Activated T-helper 1 cell treated with anti-CD3 and anti-CD28 coated beads, Interleukin-12 subunit alpha, Interleukin-12 subunit beta, Interleukin-2, Interleukin-4 antibody, amounts not matched to agents 30 ng/mL and 10 ng/mL and 1 ng/mL, durations not matched to agents 14 hours and 24 hours and 36 hours (primary cell): ENCODE measurements at regions of chr4 and their contacts with region 1.

Region 1: DNA sequence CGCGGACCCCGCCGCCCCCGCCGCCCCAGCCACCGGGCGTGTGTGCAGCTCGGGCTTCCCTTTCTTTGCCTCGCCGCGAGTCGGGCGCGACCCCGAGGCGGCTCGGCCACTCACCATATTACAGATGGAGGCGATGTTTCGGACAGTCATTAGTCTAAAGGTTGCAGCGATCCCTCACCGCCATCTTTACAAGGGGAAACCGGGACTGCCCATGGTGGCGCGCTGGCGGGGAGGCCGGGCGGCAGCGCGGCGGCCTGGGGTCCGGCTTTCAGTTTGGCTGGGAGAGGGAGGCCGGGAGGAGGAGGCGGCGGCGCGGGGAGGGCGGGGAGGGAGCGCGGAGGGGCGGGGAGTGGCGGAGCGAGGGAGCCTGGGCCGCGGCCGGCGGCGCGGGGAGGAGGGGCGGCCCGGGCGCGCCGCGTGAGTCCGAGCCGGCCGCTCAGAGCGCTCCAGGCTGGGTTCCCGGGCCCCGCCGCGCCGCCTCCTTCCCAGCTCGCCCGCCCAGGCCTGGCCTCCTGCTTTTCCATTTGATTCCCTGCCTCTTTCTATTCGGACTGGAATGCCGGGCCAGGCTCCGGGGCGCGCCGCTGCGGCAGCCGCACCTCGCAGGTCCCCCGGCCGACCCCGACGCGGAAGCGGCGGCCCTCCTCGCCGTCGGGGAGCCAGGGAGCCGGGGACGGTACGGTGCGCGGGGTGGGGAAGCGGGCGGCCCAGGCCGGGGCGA is at the start of gene USP46:
- DNase-seq: peak; percentile 30
- H3K4me3 Mint-ChIP-seq: peak within 1 kb of the TSS; percentile 86
- H3K27ac Mint-ChIP-seq: peak within 1 kb of the TSS; percentile 73
- H3K4me1 Mint-ChIP-seq: peaks cover 28% of the 10 kb centered on the region
- H3K27me3 Mint-ChIP-seq: peaks cover 14% of the 10 kb centered on the region
- total RNA-seq, gene USP46: 9.9 and 10.1 TPM in 2 replicates

Region 2: GRCh38 chr4:52588097-52588782 is 70.9 kb before region 1 on chr4:
- intact Hi-C with region 1: loop called (anchors 5 kb)
- DNase-seq: no peak
- H3K4me3 Mint-ChIP-seq: no peak overlapping the region
- H3K27ac Mint-ChIP-seq: peak overlapping the region; percentile 45
- H3K4me1 Mint-ChIP-seq: peaks cover 7% of the 10 kb centered on the region
- H3K27me3 Mint-ChIP-seq: peaks cover 5% of the 10 kb centered on the region

Region 3: GRCh38 chr4:53365486-53366300 is 706.5 kb after region 1 on chr4 and contains the start of gene SCFD2:
- intact Hi-C with region 1: loop called (anchors 10 kb)
- DNase-seq: peak; percentile 95
- H3K4me3 Mint-ChIP-seq: peak within 1 kb of the TSS; percentile 98
- H3K27ac Mint-ChIP-seq: peak within 1 kb of the TSS; percentile 88
- H3K4me1 Mint-ChIP-seq: peaks cover 39% of the 10 kb centered on the region
- H3K27me3 Mint-ChIP-seq: peaks cover 5% of the 10 kb centered on the region
- total RNA-seq, gene SCFD2: 39.4 and 40.5 TPM in 2 replicates